ENCODE measurements at regions of chr1 and their contacts with region 1.

Region 1: DNA sequence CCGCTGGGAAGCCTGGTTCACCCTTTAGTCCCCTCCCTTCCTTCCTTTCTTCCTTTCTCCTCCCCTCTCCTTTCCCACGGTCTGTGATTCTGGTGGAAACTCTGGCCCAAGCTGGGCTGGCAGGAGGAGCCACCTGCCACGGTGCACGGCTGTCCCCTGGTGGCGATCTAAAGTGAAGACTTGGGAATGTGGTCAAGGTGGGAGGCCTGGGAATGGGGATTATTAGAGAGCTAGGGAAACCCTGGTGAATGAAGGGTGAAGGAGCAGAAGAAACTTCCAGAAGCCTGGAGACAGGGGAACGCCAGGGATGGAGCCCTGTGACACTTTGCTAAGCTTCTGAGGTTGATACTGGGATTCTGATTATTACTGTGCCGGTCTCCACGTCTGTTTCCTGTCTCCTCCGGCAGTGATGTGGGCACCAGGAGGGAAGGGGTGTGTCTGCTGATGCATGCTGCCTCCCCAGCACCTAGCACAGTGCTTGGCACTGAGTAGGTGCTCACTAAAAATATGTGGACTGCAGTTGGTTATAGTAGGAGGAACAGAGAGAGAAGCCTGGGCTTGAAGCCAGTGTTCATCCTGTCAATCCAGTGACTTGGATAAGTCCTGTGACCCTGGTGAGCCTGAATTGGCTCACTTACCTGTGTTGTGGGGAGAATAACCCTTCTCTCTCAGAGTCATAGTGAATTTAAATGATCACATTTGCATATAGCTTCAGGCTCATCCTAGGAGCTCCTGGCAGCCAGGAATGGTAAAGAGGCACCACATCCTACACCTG is 71.2 kb upstream of the NBPF3 start:
- DNase-seq: peak; percentile 84
- H3K4me3 ChIP-seq: peak overlapping the region in 1 of 2 experiments; percentile 51; a peak in 1 of 4 replicates
- H3K27ac ChIP-seq: no peak overlapping the region
- H3K4me1 ChIP-seq: no peaks in the 10 kb centered on the region; a peak in 1 of 4 replicates
- H3K27me3 ChIP-seq: no peaks in the 10 kb centered on the region
- CTCF ChIP-seq: peak; percentile 99
- EP300 ChIP-seq: no peak
- RAD21 ChIP-seq: peak; percentile 100

Region 2: DNA sequence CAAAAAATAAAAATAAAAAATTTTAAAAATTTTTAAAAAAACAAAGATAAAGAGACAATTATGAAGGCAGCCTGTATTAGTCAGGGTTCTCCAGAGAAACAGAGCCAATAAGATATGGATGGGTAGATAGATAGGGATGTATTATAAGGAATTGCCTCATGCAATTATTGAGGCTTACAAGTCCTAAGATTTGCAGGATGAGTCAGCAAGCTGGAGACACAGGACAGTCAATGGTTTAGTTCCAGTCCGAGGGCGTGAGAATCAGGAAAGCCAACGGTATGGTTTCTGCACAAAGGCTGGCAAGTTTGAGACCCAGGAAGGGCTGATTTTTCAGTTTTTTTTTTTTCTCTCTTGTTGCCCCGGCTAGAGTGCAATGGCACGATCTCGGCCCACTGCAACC is 167.9 kb before region 1 on chr1:
- CTCF ChIA-PET with region 1: interaction called, 14 read pairs
- POLR2A ChIA-PET with region 1: no interaction called
- DNase-seq: no peak
- H3K4me3 ChIP-seq: no peak overlapping the region
- H3K27ac ChIP-seq: peak overlapping the region in 1 of 2 experiments; percentile 73; a peak in 2 of 4 replicates
- H3K4me1 ChIP-seq: peaks cover 0 to 4% of the 10 kb centered on the region in 2 experiments; a peak in 2 of 4 replicates
- H3K27me3 ChIP-seq: no peaks in the 10 kb centered on the region
- CTCF ChIP-seq: no peak
- EP300 ChIP-seq: no peak
- RAD21 ChIP-seq: no peak

Region 3: GRCh38 chr1:21255278-21255942 is 113.3 kb before region 1 on chr1:
- CTCF ChIA-PET with region 1: interaction called, 253 read pairs
- POLR2A ChIA-PET with region 1: interaction called, 8 read pairs
- DNase-seq: peak; percentile 83
- H3K4me3 ChIP-seq: no peak overlapping the region; a peak in 1 of 4 replicates
- H3K27ac ChIP-seq: peak overlapping the region; percentile 56 to 98; a peak in 3 of 4 replicates
- H3K4me1 ChIP-seq: peaks cover 8 to 37% of the 10 kb centered on the region in 2 experiments; a peak in 2 of 4 replicates
- H3K27me3 ChIP-seq: no peaks in the 10 kb centered on the region
- CTCF ChIP-seq: peak; percentile 86
- EP300 ChIP-seq: peak in 1 of 2 experiments; percentile 26; a peak in 1 of 4 replicates
- RAD21 ChIP-seq: peak; percentile 99

Region 4: GRCh38 chr1:21324368-21325141 is 44.1 kb before region 1 on chr1:
- CTCF ChIA-PET with region 1: interaction called, 12 read pairs
- POLR2A ChIA-PET with region 1: no interaction called
- DNase-seq: peak; percentile 76
- H3K4me3 ChIP-seq: no peak overlapping the region
- H3K27ac ChIP-seq: peak overlapping the region; percentile 87 to 94
- H3K4me1 ChIP-seq: peaks cover 43 to 73% of the 10 kb centered on the region in 2 experiments
- H3K27me3 ChIP-seq: no peaks in the 10 kb centered on the region
- CTCF ChIP-seq: no peak
- EP300 ChIP-seq: peak in 1 of 2 experiments; percentile 72; a peak in 1 of 4 replicates
- RAD21 ChIP-seq: peak; percentile 30

Region 5: GRCh38 chr1:21378705-21379494 is 10.2 kb after region 1 on chr1:
- CTCF ChIA-PET with region 1: interaction called, 20 read pairs
- POLR2A ChIA-PET with region 1: no interaction called
- DNase-seq: no peak
- H3K4me3 ChIP-seq: no peak overlapping the region
- H3K27ac ChIP-seq: no peak overlapping the region
- H3K4me1 ChIP-seq: peaks cover 0 to 2% of the 10 kb centered on the region in 2 experiments; a peak in 1 of 4 replicates
- H3K27me3 ChIP-seq: no peaks in the 10 kb centered on the region
- CTCF ChIP-seq: no peak
- EP300 ChIP-seq: no peak
- RAD21 ChIP-seq: no peak

Region 6: DNA sequence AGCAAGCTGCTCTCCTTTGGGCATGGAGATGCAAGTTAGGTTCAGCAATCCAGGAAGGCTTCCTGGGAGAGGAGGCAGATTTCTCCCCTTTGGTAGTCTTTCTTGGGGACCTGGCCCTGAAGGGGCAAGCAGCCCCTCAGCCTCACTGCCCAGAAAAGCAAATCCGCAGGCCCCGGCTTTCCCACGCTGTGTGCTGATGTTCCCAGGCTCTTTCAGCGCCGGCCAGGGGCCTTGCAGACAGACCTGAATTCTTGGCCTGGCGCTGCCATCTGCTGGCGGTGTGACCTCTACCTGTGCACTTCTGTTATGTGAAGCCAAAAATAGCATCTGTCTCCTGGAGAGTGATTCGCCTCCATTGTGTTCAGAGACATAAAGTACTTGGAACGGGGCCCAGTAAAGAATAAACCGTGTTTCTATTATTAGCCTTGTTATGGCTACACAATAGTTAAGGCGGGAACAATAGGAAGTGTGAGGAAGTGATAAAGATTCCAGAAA is 205.3 kb after region 1 on chr1:
- CTCF ChIA-PET with region 1: interaction called, 133 read pairs
- POLR2A ChIA-PET with region 1: no interaction called
- DNase-seq: peak; percentile 85
- H3K4me3 ChIP-seq: no peak overlapping the region
- H3K27ac ChIP-seq: no peak overlapping the region
- H3K4me1 ChIP-seq: peaks cover 0 to 5% of the 10 kb centered on the region in 2 experiments; a peak in 2 of 4 replicates
- H3K27me3 ChIP-seq: no peaks in the 10 kb centered on the region
- CTCF ChIP-seq: peak; percentile 78
- EP300 ChIP-seq: no peak
- RAD21 ChIP-seq: peak; percentile 92

Region 7: DNA sequence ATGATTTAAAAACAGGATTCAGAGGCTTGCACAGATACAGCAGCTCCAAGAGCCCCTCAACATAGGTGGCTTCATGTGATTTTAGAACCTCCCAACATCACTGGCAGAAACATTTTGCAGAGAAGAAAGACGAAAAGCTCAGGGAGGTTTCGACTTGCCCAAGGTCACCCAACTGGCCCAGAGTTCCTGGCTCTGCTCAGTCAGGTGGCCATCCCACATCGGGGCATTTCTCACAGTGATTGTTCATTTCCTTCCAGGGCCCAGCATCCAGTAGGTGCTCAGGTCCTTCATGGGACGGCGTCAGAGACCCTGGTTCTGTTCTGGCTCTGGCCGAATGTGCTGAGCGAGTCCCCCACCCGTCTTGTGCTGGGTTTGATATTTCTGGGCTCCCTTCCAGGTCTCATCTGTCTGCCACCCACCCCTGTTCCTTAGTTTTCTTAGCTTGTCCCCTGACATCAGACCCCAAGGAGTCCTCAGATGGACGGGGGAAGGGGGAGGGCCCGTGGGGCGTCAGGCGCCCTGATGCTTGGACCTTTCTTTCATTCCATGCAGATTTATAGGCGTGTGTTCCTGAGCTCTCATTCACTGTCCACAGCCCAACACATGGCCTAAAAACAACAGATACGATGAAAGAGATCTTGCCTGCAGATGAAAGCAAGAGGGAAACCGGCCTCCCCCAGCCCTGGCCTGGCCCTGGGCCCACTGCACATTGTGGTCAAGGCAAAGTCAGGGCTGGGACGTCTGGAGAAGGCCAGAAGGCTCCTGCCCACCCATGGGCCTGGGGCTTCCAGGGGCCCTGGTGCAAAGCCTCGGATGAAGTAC is 959.8 kb after region 1 on chr1:
- CTCF ChIA-PET with region 1: no interaction called
- POLR2A ChIA-PET with region 1: no interaction called
- DNase-seq: peak; percentile 85
- H3K4me3 ChIP-seq: no peak overlapping the region
- H3K27ac ChIP-seq: peak overlapping the region in 1 of 2 experiments; percentile 96; a peak in 2 of 4 replicates
- H3K4me1 ChIP-seq: peaks cover 0 to 62% of the 10 kb centered on the region in 2 experiments; a peak in 2 of 4 replicates
- H3K27me3 ChIP-seq: no peaks in the 10 kb centered on the region; the same call in 1 of the 2 replicates
- CTCF ChIP-seq: no peak
- EP300 ChIP-seq: peak in 1 of 2 experiments; percentile 83; a peak in 2 of 4 replicates
- RAD21 ChIP-seq: peak; percentile 37